Activated naive CD4-positive, alpha-beta T cell treated with anti-CD3 and anti-CD28 coated beads for 36 hours (primary cell): ENCODE measurements at regions of chr1 and their contacts with region 1.

Region 1: DNA sequence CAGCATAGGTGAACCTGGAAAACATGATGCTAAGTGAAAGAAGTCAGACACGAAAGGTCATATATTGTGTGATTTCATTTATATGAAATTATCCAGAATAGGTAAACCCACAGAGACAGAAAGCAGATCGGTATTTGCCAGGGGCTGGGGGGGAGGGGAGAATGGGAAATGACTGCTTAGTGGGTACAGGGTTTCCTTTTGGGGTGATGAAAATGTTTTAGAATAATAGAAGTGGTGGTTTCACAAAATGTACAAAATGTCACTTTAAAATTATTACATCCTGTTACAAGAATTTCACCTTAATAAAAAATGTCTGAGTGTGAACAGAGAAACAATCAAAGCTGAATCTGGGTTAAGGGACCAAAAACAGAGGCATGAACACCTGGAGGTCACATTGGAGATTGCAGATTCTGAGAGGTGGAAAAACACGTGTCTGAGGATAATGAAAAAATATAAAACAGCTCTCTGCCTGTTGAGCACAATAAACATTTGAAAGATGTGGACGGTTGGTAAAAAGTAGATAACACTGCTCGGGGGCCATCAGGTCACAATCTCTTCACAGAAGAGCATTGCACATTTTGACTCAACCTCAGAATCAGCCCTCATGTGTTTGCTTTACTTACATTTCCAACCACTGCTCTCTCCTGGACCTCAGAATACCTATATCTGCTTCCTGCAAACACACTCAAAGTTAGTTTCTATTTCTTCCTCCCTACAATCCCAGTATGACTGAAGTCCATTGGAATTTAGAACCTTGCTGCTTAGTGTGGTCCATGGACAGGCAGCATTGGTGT is 3.2 kb downstream of the SLAMF6 start:
- DNase-seq: peak; percentile 60
- H3K4me3 Mint-ChIP-seq: peak overlapping the region; percentile 85
- H3K27ac Mint-ChIP-seq: peak overlapping the region; percentile 97
- H3K4me1 Mint-ChIP-seq: peaks cover 71% of the 10 kb centered on the region
- H3K27me3 Mint-ChIP-seq: no peaks in the 10 kb centered on the region

Region 2: DNA sequence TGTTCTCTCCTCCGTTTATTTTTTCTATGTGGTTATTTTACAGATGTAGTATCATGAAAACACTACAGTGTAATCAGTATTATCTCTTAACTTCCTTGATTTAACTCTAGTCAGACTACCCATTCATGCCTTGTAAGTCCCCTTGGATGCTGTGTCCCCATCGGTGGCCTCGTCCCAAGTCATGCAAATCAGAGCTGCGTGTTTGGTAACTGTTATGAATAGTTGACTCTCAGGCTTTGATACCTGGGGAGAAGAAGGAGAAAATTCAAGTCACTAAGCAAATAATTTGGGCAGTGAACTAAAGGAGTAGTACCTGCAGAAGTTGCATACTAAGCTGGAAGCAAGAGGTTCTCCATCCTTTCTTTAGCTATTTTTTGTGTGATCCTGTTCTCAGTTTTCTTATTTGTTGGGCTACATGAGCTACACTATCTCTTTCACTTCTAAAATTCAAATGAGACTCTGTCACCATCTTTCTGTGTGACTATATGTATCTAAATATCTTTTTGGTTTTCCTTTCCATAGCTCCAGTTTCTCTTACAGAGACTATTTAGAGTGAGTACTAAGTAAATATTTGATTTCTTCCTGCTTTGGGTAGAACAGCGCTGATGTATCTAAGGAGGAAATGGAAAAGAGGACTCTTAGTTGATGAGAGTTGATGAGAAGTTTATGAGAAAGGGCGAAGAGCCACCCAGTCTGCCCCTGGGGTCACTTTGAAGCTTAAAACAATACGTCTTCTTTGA is 68.5 kb before region 1 on chr1:
- CTCF ChIA-PET with region 1: interaction called, 8 read pairs
- intact Hi-C with region 1: loop called (anchors 1 kb)
- DNase-seq: no peak
- H3K4me3 Mint-ChIP-seq: peak overlapping the region; percentile 56
- H3K27ac Mint-ChIP-seq: peak overlapping the region; percentile 93
- H3K4me1 Mint-ChIP-seq: peaks cover 76% of the 10 kb centered on the region
- H3K27me3 Mint-ChIP-seq: no peaks in the 10 kb centered on the region

Region 3: GRCh38 chr1:160494620-160495019 is 25.2 kb before region 1 on chr1:
- CTCF ChIA-PET with region 1: interaction called, 3 read pairs
- intact Hi-C with region 1: loop called (anchors 1 kb)
- DNase-seq: no peak
- H3K4me3 Mint-ChIP-seq: no peak overlapping the region
- H3K27ac Mint-ChIP-seq: peak overlapping the region; percentile 48
- H3K4me1 Mint-ChIP-seq: peaks cover 57% of the 10 kb centered on the region
- H3K27me3 Mint-ChIP-seq: no peaks in the 10 kb centered on the region

Region 4: DNA sequence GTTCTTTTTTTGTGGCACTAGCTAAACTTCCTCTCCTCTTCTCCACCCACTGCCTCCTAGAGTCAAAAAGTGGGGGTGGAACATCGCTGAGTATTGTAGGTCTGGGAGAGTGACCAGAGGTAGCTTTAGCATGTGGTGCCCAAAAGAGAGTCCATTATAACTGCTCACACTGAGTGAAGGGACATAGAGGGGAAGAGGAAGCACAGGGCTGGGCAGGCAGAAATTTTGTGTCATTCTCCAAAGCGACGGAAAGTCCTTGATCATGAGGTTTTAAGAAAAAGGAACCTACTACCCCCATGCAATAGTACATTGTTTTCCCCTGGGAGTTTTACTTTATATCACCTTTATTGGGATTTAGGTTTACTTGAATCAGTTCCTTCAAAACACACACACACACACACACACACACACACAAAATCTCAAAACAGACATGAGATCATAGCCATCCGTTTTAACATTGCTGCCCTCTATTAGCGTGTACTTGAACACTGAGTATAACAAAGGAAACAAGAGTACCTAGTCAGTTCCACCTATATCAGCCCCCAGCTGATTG is 55.3 kb after region 1 on chr1:
- CTCF ChIA-PET with region 1: no interaction called
- intact Hi-C with region 1: loop called (anchors 1 kb)
- DNase-seq: no peak
- H3K4me3 Mint-ChIP-seq: peak overlapping the region; percentile 46
- H3K27ac Mint-ChIP-seq: peak overlapping the region; percentile 94
- H3K4me1 Mint-ChIP-seq: peaks cover 86% of the 10 kb centered on the region
- H3K27me3 Mint-ChIP-seq: no peaks in the 10 kb centered on the region

Region 5: DNA sequence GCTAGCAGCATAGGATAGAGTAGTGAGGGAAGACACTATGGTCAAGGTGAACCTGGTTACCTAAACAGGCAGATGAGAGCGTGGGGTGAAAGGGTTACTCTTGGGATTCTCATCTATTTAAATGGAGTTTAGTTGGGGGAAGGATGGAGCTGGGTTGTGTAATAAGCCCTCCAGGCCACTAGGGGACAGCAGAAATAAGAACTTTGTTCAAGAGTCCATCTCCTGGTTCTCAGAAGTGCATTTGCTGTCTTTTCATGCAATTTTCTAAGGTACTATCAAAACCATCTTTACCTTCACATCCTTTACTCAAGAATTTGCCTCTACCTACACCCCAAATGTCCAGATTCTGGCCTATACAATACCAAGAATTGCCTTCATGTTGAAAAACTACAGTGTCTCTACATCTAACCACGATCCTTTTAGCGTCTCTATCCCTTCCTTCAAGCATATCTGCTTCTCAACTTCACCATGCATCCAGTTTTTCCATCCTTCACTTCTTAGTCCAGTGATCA is 99.0 kb after region 1 on chr1:
- CTCF ChIA-PET with region 1: no interaction called
- intact Hi-C with region 1: loop called (anchors 1 kb)
- DNase-seq: peak; percentile 70
- H3K4me3 Mint-ChIP-seq: no peak overlapping the region
- H3K27ac Mint-ChIP-seq: peak overlapping the region; percentile 61
- H3K4me1 Mint-ChIP-seq: peaks cover 57% of the 10 kb centered on the region
- H3K27me3 Mint-ChIP-seq: no peaks in the 10 kb centered on the region